Uterus (tissue), 4 donors: ENCODE measurements at regions of chr10 and their contacts with region 1.

Region 1: DNA sequence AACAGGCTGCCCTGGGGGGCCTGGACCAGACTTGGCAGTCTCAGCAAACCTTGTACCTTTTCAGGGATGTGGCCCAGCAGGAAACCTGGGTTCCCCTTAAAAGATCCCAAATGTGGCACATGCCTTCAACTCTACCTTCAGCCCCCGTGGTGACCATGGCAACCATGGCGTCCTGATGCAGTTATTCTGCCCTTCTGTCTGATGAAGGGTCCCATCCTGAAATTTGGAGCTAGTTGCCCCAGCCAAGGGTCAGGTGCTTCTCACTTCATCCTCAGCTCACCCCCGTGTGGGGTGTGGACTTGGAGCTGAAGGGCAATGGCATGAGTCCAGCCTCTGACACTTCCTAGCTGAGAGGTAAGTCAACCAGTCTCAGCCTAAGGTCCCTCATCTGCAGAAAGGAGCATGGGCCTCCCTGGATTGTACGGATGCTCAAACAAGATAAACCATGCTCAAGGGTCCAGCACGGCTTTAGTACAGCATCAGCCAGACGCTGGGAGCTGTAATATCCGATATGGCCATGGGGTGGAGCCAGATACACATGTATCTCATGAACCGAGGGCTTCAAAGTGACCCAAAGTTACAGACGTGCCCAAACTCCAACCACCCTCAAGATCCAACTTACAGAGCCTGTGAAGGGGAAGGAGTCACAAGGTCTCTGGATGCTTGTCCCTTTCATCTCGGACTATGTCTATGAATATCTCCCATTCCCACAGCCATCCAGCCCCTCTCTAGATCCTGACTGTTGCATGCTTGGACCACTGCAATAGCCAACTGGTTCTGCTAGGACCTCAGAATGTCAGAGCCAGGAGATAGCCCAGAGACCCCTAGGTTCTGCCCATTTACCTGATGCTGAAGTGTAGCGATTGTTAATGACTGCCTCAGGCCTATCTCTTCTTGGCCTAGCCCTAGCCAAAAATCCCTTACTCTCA is 142.5 kb downstream of the SH3PXD2A start:
- DNase-seq: peak; percentile 86 to 88
- H3K4me3 ChIP-seq: no peak overlapping the region
- H3K27ac ChIP-seq: no peak overlapping the region
- H3K4me1 ChIP-seq: no peaks in the 10 kb centered on the region
- H3K27me3 ChIP-seq: no peaks in the 10 kb centered on the region
- CTCF ChIP-seq: peak; percentile 88 to 98 (median 94)
- POLR2A ChIP-seq: no peak

Region 2: GRCh38 chr10:103859161-103860086 is 146.6 kb after region 1 on chr10:
- intact Hi-C with region 1: loop called (anchors 2 kb)
- DNase-seq: peak; percentile 66 to 73
- H3K4me3 ChIP-seq: no peak overlapping the region
- H3K27ac ChIP-seq: no peak overlapping the region
- H3K4me1 ChIP-seq: no peaks in the 10 kb centered on the region
- H3K27me3 ChIP-seq: no peaks in the 10 kb centered on the region
- CTCF ChIP-seq: peak; percentile 73 to 91 (median 84)
- POLR2A ChIP-seq: no peak